Caco-2 (cell line): ENCODE measurements at regions of chr11 and their contacts with region 1.

Region 1: GRCh38 chr11:13140028-13140870 is 131.1 kb downstream of the RASSF10 start:
- DNase-seq: peak; percentile 89 to 95
- H3K4me3 ChIP-seq: no peak overlapping the region
- H3K4me3 Mint-ChIP-seq: peak overlapping the region; percentile 23
- H3K27ac Mint-ChIP-seq: peak overlapping the region; percentile 72
- H3K4me1 ChIP-seq: peaks cover 78% of the 10 kb centered on the region
- H3K4me1 Mint-ChIP-seq: peaks cover 54% of the 10 kb centered on the region
- H3K27me3 ChIP-seq: no peaks in the 10 kb centered on the region
- H3K27me3 Mint-ChIP-seq: no peaks in the 10 kb centered on the region
- CTCF ChIP-seq: no peak

Region 2: DNA sequence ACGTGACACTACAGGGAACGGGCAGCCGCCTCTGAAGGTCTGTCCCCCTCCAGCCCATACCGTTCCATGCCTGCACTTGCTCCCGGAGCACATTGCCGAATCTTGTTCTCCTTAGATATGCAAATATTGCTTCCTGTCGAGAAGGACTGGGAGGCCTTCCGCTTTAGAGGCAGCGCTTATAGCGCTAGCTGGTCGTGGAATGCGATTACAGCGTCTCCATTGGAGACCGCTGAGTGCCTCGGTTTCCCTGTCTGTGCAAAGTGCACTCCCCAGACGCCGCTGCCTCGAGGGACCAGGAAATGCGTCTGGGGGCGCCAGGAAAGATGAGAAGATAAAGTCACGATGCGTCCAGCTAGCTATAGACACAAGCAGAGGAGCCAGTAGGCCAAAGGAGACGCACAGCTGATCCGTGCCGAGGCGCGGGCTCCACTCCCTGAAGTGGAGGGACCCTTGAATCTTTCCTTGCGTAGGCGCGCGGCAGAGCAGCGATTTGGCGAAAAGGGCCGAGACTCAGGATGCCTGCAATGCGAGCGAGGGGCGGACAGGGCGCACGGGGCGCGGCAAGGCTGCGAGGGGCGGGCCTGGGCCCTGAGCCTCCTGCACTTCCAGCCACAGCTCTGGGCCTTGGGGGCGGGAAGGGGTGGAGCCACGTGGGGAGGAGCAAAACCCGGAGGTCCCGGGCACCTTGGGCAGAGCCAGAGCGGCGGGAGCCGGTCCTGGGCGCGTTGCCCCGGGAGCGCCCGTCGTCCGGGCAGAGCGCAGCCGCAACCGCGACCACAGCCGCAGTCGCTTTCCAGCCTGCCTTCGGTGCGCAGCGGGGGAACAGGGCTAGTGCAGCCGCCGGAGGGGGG is 131.4 kb before region 1 on chr11 and contains the start of gene RASSF10:
- CTCF ChIA-PET with region 1: no interaction called
- POLR2A ChIA-PET with region 1: no interaction called
- intact Hi-C with region 1: loop called (anchors 2 kb)
- DNase-seq: peak; percentile 74 to 79
- H3K4me3 ChIP-seq: peak within 1 kb of the TSS; percentile 52
- H3K4me3 Mint-ChIP-seq: peak within 1 kb of the TSS; percentile 74
- H3K27ac Mint-ChIP-seq: no peak within 1 kb of the TSS
- H3K4me1 ChIP-seq: peaks cover 31% of the 10 kb centered on the region
- H3K4me1 Mint-ChIP-seq: peaks cover 21% of the 10 kb centered on the region
- H3K27me3 ChIP-seq: 0 out of 2 replicates have a peak, but pooled peaks cover 1% of the 10 kb centered on the region
- H3K27me3 Mint-ChIP-seq: peaks cover 13% of the 10 kb centered on the region
- CTCF ChIP-seq: no peak
- total RNA-seq, gene RASSF10: 0.91 and 1.3 TPM in 2 replicates